Mucosa of descending colon (tissue), 3 donors: ENCODE measurements at regions of chr16 and their contacts with region 1.

Region 1: DNA sequence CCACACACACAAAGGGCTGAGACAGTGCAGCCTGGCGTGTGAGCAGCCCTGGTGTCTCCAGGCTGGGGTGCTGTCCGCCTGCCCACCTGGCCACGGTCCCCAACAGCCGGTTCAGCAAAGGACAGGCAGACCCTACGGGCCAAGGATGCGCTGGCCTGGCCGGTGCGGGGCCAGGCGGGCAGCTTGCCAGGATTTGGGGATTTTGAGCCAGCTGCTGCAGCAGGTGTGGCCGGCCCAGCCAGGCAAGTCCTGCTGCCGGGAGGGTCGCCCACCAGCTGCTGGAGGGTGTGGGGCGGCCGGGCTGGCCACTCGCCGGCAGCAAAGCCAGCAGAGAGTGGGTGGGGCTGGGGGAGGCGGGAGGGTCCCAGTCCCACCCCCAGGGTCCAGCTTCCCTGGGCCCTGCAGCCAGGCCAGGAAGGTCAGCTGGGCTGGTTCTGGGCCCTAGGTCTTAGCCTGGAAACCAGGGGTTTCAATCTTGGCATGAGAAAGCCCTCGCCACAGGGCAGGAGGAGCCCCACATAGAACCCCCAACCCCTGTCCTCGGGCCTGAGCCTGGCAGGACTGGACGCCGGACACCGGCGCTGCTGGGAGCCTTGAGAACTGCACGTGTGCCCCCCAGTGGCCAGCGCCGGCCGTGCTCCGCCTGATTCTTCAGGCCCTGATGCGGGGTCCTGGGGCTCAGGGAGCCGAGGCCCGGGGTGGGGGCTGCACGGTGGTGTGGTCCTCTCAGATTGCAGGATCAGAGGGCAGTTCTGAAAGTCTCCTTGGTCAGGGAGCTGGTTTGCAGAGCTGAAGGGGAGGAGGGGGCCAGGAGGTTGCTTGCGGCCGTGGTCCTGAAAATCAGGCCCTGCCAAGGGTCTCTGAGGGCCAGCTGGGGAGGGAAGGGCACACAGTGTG is 17.6 kb upstream of the SSTR5 start:
- DNase-seq: peak in 2 of 3 donors; percentile 74 to 75
- ATAC-seq: peak; percentile 79
- H3K4me3 ChIP-seq: no peak overlapping the region
- H3K4me1 ChIP-seq: no peaks in the 10 kb centered on the region
- CTCF ChIP-seq: peak; percentile 55

Region 2: GRCh38 chr16:714558-715476 is 340.1 kb before region 1 on chr16 and contains the start of gene METRN:
- intact Hi-C with region 1: loop called in 1 of 2 experiments (anchors 10 kb)
- DNase-seq: peak; percentile 92 to 96 (median 95)
- ATAC-seq: peak; percentile 83
- H3K4me3 ChIP-seq: peak within 1 kb of the TSS; percentile 17
- H3K4me1 ChIP-seq: peaks cover 37% of the 10 kb centered on the region
- CTCF ChIP-seq: no peak
- total RNA-seq, gene METRN: 15.8 to 34.5 (median 22.0) TPM

Region 3: GRCh38 chr16:813204-813915 is 241.5 kb before region 1 on chr16:
- intact Hi-C with region 1: loop called in 1 of 2 experiments (anchors 10 kb)
- DNase-seq: peak in 1 of 3 donors; percentile 45
- ATAC-seq: peak; percentile 73
- H3K4me3 ChIP-seq: no peak overlapping the region
- H3K4me1 ChIP-seq: peaks cover 2% of the 10 kb centered on the region
- CTCF ChIP-seq: no peak

Region 4: DNA sequence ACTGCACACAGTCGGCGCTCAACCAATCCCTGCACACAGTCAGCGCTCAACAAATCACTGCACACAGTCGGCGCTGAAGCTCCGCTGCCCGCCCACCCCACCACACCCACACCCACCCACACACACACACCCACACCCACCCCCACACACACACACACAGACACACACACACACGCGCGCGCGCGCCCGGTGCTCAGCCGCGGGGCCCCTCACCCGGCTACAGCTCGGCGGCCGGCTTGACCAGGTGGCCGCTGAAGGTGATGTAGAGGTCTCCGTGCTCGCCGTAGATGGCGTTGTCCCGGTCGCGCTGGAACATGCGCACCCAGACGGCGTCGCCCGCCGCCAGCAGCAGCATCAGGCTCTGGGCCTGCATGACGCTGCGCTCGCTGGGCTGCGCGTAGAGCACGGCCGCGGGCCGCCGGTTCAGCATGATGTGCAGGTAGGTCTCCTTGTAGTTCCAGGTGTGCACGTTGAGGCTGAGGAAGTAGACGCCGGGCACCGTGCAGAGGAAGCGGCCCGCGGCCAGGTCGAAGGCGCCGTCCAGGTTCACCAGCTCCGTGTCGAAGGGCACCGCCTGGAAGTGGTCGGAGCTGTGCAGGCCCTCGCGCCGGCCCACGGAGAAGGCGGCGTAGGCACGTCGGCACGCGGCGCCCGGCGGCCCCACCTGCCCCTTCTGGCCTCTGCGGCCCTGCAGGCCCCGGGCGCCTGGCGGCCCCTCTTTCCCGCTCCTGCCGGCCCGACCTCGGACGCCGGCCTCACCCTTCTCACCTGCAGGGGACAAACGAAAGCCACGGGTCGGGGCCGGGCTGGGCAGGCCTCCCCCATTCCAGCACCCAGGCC is 38.6 kb after region 1 on chr16:
- intact Hi-C with region 1: no loop called
- DNase-seq: no peak
- ATAC-seq: no peak
- H3K4me3 ChIP-seq: no peak overlapping the region
- H3K4me1 ChIP-seq: peaks cover 23% of the 10 kb centered on the region
- CTCF ChIP-seq: no peak